Right ventricle myocardium superior (tissue), 1 donor: ENCODE measurements at regions of chr9 and their contacts with region 1.

Region 1: DNA sequence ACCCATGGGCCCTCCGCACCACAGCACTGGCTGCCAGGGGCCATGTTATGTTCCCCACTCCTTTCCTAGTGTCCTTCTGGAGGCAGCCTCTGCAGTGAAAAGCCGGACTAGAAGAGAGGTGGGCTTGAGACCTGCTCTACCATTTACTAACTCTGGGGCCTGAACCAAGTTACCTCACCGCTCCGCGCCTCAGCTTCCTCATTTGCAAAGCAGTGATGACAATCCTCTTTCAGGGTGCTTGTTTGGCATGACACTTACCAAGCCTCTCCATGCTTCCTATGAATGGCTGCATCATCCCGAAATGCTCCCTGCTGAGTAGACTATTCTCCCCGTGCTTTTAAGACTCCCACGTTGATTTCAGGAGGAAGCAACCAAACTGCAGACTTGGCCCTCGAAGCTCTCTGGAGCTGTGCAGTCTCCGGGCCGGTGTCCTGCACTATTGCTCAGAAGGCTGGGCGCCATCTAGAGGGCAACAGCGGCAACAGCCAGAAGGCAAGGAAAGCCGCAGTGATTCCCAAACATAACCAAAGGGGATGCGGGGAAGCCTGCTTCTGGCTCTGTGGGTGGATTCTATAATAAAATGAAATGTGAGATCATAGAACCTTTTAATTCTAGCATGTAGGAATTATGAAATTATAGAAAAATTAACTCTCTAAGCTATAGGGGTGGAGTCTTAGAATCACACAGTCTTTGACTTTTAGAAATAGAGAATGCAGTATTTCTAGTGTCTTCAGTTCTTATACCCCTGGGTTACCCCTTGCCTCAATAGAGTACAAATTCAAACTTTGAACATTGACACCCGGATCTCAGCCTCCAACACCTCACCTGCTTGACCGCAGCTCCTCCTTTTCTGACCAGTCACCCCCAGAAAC is 599.8 kb upstream of the BRINP1 start:
- DNase-seq: peak; percentile 84
- ATAC-seq: peak; percentile 94

Region 2: GRCh38 chr9:119556129-119556875 is 412.8 kb before region 1 on chr9:
- intact Hi-C with region 1: loop called (anchors 2 kb)
- DNase-seq: peak; percentile 80
- ATAC-seq: peak; percentile 96

Region 3: DNA sequence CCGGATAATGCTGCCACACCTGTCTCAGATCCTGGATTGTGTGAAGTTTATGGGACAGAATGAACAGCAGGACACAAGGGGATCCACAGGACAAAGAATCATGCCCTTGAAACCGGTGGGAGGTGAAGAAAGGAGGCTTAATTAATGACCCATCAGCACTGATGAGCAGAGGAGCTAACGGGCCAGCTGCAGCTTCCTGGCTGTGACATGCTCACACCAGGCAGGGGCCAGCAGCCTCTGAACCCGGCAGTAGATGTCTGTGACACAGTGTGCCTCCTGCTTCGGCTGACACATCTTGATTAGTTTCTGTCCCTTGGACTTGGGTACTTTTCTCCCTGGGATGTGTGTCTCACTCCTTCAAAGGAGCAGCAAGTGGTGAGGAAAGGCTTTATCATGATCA is 271.1 kb before region 1 on chr9:
- intact Hi-C with region 1: no loop called
- DNase-seq: no peak
- ATAC-seq: no peak

Region 4: DNA sequence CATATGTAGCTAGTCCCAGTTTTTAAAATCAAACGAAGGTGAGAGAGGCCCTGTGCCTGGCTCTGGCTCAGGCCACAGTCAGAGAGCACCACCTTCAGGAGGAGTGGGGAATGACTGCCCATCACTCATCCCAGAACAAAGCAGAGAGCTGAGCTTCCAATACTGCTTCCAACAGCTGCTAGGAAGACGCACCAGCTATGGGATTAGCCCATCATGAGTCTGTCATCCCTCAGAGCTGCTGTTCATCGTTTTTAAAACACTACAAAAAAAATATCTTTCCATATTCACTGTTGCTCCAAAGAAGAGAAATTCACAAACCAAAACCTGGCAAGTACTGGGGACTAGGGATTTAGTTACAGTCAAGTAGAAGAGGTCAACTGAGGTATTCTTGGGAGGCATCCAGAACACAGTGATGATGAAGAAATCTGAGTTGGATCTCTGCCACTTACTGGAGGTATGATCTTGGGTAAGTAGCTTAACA is 508.5 kb after region 1 on chr9:
- intact Hi-C with region 1: loop called (anchors 10 kb)
- DNase-seq: peak; percentile 68
- ATAC-seq: peak; percentile 78